Heart left ventricle (tissue), 16 donors: ENCODE measurements at regions of chr10 and their contacts with region 1.

Region 1: DNA sequence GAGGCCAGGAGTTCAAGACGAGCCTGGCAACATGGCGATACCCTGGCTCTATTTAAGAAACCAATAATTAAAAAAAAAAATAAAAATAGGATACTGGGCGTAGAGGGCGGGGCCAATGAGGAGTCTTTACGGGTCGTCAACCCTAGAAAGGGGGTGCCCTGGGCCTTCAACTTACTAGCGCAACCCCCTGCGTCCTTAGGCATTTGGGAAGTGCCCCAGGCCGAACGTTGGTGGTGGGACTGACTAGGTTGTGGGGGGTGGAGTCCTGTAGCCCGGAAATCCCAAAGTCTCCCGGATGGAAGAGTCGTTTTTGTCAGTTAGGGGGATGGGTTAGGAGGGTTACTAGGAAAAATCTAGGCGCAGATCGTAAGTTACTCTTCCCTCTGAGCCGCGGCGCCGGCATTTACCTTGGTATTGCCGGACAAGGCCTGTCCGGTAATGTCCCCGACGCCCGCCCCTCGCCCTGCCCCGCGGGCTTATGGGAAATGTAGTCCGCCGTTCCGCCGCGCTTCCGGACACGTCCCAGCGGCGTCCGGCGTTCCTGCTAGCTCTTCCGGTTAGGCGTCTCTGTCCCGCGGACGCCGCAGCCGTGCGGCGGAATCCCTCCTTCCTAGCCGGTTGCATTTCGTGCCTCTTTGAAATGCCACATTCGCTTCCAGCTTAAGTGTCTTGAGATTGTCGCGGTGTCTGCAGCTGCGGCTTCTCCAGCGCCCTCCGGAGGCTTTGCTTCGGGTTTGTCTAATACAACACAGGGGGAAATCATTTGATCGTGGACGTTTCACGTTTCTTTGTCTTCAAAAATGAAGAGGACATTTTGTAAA is 1.3 kb upstream of the ACBD5 start:
- DNase-seq: peak; percentile 92 to 96 (median 94)
- ATAC-seq: peak; percentile 91 to 93 (median 91)
- H3K4me3 ChIP-seq: peak overlapping the region; percentile 61 to 90 (median 80)
- H3K27ac ChIP-seq: peak overlapping the region; percentile 90 to 98 (median 96)
- H3K4me1 ChIP-seq: peaks cover 2 to 43% (median 34%) of the 10 kb centered on the region in 12 donors
- H3K27me3 ChIP-seq: no peaks in the 10 kb centered on the region
- CTCF ChIP-seq: peak; percentile 11 to 52 (median 20)
- POLR2A ChIP-seq: peak; percentile 75 to 91

Region 2: DNA sequence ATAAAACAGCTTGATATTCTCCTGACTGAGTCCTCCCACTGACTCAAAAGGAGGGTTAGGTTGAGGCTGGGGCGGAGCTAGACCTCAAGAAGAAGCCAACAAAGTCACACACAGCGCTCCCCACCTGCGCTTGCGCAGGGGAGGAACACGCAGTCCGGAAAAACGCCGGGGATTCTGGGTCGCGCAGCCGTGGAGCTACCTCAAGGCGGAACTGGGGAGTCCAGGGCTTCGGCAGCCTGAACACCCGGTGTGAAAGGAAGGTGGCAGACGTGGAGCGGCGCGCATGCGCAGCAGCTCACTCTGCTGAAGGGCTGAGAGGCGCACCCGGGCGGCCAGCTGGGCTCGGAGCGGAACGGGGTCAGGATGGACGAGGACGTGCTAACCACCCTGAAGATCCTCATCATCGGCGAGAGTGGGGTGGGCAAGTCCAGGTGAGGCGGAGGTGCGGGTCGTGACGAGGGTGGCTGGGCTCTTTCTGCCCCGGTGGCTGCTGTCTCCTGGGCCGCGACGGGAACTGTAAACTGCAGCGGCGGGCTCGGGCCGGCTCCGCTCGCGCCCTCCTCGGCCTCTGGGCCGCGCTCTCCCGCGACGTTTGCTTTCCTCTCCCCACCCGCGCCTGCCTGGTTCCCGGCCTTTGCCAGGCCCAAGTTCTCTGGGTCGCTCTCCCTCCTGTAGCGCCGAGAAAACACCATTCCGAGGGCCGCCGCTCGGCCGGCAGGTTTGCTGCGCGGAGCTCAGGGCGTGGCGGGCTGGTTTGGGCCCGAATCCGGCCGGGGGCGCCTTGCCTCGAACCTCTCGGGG is 262.3 kb after region 1 on chr10 and contains the start of gene RAB18:
- intact Hi-C with region 1: loop called in 1 of 10 experiments (anchors 10 kb)
- DNase-seq: peak; percentile 97 to 99 (median 99)
- ATAC-seq: peak; percentile 99 to 100 (median 100)
- H3K4me3 ChIP-seq: peak within 1 kb of the TSS; percentile 49 to 98 (median 89)
- H3K27ac ChIP-seq: peak within 1 kb of the TSS; percentile 73 to 92 (median 86)
- H3K4me1 ChIP-seq: peaks cover 0 to 46% (median 31%) of the 10 kb centered on the region in 12 donors
- H3K27me3 ChIP-seq: no peaks in the 10 kb centered on the region
- CTCF ChIP-seq: peak in 4 of 12 donors; percentile 13 to 34 (median 22)
- POLR2A ChIP-seq: peak in 1 of 2 donors; percentile 84
- total RNA-seq, gene RAB18: 39.8 to 145 (median 128) TPM